Activated CD4-positive, alpha-beta T cell treated with anti-CD3 and anti-CD28 coated beads, Interleukin-2, amount 10 ng/mL, durations not matched to agents 24 days and 14 days (primary cell): ENCODE measurements at regions of chr6 and their contacts with region 1.

Region 1: GRCh38 chr6:137218917-137219663 is at the start of gene IFNGR1:
- DNase-seq: peak; percentile 99
- H3K4me3 Mint-ChIP-seq: peak within 1 kb of the TSS; percentile 99
- H3K27ac Mint-ChIP-seq: peak within 1 kb of the TSS; percentile 98
- H3K4me1 Mint-ChIP-seq: peaks cover 45% of the 10 kb centered on the region
- H3K27me3 Mint-ChIP-seq: no peaks in the 10 kb centered on the region
- total RNA-seq, gene IFNGR1: 13.9 and 14.4 TPM in 2 replicates

Region 2: DNA sequence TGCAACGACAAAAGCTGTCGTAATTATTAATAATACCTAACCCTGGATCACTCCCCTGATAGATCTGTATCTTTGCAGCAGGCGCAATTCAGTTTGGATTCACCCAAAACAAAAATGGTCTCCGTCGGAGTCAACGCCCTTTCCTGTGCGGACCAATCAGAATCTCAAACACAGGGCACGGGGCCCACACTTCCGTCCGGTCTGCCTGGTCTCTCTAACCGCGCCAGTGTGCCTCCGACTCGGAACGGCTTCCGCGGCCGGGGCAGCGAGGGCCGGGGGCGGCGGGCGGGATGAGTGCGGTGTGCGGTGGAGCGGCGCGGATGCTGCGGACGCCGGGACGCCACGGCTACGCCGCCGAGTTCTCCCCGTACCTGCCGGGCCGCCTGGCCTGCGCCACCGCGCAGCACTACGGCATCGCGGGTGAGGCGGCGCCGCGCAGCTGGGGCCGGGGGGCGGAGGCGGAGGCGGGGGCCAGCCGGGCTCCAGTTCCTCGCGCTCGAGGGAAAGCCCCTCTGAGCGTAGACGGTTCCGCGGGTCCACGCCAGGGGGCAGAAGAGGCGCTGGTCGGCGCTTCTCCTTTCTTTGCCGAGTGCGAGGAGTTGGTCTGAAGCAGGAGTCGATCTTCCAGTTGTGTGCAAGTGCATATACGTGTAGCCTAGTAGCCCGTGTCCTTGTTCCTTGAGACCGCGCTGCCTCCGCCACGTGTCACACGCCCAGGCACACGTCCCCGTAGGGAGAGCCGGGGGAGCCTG is 396.5 kb before region 1 on chr6 and contains the start of gene PEX7:
- intact Hi-C with region 1: loop called (anchors 10 kb)
- DNase-seq: peak; percentile 96
- H3K4me3 Mint-ChIP-seq: peak within 1 kb of the TSS; percentile 95
- H3K27ac Mint-ChIP-seq: peak within 1 kb of the TSS; percentile 96
- H3K4me1 Mint-ChIP-seq: peaks cover 18% of the 10 kb centered on the region
- H3K27me3 Mint-ChIP-seq: peaks cover 6% of the 10 kb centered on the region
- total RNA-seq, gene PEX7: 4.3 and 5.4 TPM in 2 replicates

Region 3: GRCh38 chr6:137165375-137166246 is 53.5 kb before region 1 on chr6:
- intact Hi-C with region 1: loop called (anchors 2 kb)
- DNase-seq: peak; percentile 88
- H3K4me3 Mint-ChIP-seq: peak overlapping the region; percentile 7
- H3K27ac Mint-ChIP-seq: peak overlapping the region; percentile 41
- H3K4me1 Mint-ChIP-seq: peaks cover 34% of the 10 kb centered on the region
- H3K27me3 Mint-ChIP-seq: no peaks in the 10 kb centered on the region

Region 4: GRCh38 chr6:137206577-137206976 is 12.5 kb before region 1 on chr6:
- intact Hi-C with region 1: no loop called
- DNase-seq: no peak
- H3K4me3 Mint-ChIP-seq: no peak overlapping the region
- H3K27ac Mint-ChIP-seq: no peak overlapping the region
- H3K4me1 Mint-ChIP-seq: peaks cover 1% of the 10 kb centered on the region
- H3K27me3 Mint-ChIP-seq: no peaks in the 10 kb centered on the region

Region 5: DNA sequence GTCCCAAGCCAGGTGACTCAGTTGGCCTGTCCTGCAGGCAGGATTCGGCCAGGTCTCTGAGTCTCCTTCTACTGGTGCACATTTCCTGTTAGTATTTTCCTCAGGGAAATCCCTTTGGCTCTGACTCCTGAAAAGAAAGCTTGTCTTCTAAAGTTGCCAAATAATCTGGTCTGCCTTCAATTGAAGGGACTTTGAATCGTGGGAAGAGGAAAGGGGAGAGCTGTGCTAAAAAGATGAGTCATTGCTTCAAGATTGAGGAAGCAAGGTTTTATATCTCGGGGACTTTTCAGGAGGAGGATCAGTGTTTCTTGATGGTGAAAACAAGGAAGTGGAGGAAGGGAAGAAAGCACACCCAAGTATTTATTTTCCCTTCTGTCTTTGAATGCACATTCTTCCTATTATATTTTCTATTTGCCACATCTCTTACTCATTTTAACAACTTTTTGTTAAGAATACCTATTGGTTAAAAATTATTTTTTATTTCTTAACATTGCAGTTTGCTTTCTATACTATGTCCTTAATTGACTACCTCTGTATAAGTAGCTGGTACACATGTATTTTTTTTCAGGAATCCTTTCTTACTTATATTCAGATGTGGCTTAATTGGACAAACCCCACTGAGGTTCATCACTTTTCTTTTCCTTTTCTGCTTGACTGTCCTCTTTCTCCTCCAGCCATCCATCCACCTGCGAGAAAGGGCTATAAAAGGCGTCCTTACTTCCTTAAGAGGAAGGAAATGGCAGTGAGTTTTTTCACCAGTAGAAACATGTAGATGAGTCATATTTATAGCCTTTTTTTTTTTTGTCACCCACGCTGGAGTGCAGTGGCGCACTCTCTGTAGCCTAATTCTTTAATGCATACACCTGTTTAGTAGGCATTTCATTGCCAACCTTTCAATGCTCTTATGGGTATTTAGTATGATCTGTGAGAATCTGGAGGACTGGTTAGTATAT is 15.1 kb after region 1 on chr6:
- intact Hi-C with region 1: loop called (anchors 1 kb)
- DNase-seq: peak; percentile 72
- H3K4me3 Mint-ChIP-seq: peak overlapping the region; percentile 11
- H3K27ac Mint-ChIP-seq: peak overlapping the region; percentile 55
- H3K4me1 Mint-ChIP-seq: peaks cover 46% of the 10 kb centered on the region
- H3K27me3 Mint-ChIP-seq: peaks cover 14% of the 10 kb centered on the region